BJ (cell line): ENCODE measurements at regions of chr6 and their contacts with region 1.

Region 1: DNA sequence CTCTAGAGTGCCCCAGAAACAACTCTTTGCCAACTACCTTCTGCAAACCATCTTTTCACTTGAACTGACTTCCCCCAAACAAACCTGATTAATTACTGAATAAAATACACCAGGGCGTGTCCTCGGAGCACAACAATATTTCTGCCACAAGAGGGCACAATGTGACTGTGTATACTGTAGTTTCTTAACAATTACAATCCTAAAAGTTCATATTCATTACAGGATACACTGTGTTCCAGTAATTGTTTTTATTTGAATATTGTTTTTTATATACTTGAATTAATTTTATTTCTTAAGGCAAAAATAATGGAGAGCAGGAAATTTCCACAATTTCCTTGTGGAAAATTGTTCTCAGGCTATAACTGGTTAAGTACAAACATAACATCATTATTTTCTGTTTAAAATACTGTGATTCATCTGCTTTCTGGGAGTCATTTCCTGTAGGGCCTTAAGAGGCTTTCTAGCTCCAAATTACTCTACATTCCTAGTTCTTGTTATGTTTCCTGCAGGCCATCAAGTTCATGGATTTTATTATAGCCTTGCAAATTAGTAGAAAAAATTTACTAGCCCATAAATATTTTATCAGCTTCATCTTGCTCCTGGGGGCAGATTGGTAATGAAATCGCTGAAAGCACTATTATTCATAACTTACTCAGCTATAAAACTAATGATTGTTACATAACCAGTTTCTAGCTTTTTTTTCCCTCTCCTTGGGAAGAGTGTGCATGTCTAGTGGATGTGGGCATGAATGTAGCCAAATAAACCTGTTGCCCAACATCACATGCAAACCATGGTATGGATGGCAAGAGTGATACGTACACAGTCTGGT is 51.9 kb upstream of the SLC22A16 start:
- DNase-seq: peak; percentile 96
- H3K4me3 ChIP-seq: no peak overlapping the region
- H3K27me3 ChIP-seq: no peaks in the 10 kb centered on the region
- CTCF ChIP-seq: peak; percentile 68

Region 2: DNA sequence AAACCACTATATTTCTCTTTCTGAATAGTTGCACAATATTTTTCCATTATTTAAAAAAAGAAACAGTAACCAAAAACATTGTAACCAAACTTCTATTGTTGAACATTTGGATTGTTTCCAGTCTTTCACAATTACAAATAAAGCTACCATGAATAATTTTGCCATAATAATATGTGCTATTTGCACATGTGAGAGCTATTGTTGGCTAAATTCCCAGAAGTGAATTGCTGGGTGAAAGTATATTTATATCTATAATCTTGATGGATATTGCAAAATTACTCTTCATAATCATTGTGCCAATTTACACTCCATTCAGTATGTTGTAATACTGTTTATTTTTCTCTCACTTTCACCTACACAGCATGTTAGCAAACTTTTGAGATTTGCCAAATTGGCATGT is 15.3 kb before region 1 on chr6:
- CTCF ChIA-PET with region 1: interaction called, 17 read pairs
- POLR2A ChIA-PET with region 1: no interaction called
- DNase-seq: no peak
- H3K4me3 ChIP-seq: no peak overlapping the region
- H3K27me3 ChIP-seq: no peaks in the 10 kb centered on the region; the same call in 1 of the 2 replicates
- CTCF ChIP-seq: no peak

Region 3: DNA sequence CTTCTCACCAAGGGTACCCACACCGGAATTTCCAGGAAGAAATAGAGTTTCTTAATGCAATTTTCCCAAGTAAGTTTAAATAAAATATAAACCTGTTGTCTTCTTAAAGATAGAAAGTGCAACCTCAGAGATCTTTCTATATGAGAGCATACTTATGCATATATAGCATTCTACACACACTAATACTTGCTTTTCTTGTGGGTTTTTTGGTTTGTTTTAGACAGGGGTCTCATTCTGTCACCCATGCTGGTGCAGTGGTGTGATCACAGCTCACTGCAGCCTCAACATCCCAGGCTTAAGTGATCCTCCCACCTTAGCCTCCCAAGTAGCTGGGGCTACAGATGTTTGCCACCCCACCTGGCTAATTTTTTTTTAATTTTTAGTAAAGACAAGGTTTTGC is 362.0 kb after region 1 on chr6:
- CTCF ChIA-PET with region 1: no interaction called
- POLR2A ChIA-PET with region 1: interaction called, 17 read pairs
- DNase-seq: no peak
- H3K4me3 ChIP-seq: no peak overlapping the region
- H3K27me3 ChIP-seq: no peaks in the 10 kb centered on the region
- CTCF ChIP-seq: no peak

Region 4: DNA sequence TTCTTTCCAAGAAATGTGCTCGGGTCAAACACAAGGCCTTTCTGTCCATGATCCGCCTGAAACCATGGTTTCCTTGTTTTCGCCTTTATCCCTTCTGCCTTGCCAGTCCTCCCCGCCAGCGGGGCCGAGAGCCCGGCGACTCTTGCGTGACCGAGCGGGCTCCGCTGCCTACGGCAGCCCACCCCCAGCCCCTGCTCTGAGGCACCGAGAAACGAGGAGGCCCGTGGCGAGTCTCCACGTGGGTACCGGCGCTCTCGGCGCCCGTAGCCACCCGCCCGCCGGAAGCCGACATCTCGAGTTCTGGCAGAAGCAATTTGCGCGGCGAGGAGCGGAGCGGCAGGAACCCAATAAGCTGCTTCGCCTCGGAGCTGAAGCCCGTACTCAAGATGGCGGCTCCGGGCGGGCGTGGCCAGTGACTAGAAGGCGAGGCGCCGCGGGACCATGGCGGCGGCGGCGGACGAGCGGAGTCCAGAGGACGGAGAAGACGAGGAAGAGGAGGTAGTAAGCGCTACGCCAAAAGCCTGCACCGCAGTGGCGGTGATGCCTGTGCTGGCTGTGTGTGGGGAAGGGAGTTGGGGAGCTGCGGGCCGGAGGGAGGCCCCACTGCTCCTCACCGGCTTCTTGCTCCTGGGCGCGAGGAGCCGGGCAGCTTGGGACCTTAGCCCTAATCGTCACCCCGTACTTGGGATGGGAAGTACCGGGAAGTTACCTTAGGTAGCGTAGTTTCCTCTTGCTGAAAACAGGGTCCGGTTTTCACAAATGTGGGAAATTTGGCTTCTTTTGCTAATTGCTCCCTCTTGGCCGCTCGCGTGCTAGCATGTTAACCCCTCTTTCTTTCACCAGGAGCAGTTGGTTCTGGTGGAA is 430.2 kb after region 1 on chr6 and contains the start of gene GTF3C6:
- CTCF ChIA-PET with region 1: interaction called, 10 read pairs
- POLR2A ChIA-PET with region 1: interaction called, 4 read pairs
- DNase-seq: peak; percentile 41
- H3K4me3 ChIP-seq: peak within 1 kb of the TSS; percentile 87
- H3K27me3 ChIP-seq: no peaks in the 10 kb centered on the region
- CTCF ChIP-seq: no peak
- polyA plus RNA-seq, gene GTF3C6: 9.1 and 32.4 TPM in 2 replicates

Region 5: GRCh38 chr6:110999634-111000270 is 471.4 kb after region 1 on chr6:
- CTCF ChIA-PET with region 1: interaction called, 28 read pairs
- POLR2A ChIA-PET with region 1: no interaction called
- DNase-seq: no peak
- H3K4me3 ChIP-seq: no peak overlapping the region
- H3K27me3 ChIP-seq: no peaks in the 10 kb centered on the region
- CTCF ChIP-seq: peak; percentile 37